ENCODE measurements at regions of chr20 and their contacts with region 1.

Region 1: DNA sequence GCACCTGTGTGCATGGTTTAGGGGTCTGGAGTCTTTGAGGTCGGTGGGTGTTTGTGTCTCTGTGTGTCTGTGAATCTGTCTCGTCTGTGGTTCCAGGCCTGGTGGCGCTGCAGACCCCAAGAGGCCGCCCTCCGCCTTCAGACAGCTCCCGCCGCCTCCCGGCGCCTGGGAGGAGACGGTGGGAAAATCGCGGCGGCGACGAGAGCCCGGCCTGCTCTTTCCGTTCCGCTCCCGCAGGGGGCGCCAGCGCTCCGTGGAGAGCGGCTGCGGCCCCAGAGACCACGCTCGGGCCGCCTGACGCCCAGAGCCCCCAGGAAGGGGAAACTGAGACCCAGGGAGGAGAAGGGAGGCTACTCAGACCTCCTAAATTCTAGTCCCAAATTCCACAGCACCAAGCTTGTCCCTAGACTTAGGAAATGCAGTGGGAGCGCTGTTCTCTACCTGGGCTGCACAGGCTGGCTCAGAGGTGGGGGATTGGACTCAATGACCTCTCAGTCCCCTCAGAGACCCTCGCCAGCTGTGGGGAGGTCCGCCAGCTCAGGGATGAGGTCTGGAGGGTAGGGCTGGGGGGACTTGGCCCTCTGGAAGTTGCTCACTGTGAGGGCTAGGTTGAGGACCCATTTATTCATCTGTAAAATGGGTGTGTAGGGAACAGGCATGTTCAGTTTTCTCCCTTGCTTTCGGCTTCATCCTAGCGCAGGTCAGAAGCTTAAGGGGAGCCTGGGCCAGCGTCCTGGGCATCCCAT is 36.9 kb upstream of the BLCAP start:
- DNase-seq: peak; percentile 62 to 82 (median 78)
- ATAC-seq: peak; percentile 88
- H3K4me3 ChIP-seq: no peak overlapping the region
- H3K27ac ChIP-seq: no peak overlapping the region
- H3K4me1 ChIP-seq: peaks cover 10 to 16% of the 10 kb centered on the region in 2 experiments; a peak in 4 of 5 replicates
- H3K27me3 ChIP-seq: peaks cover 5 to 30% of the 10 kb centered on the region in 2 experiments; a peak in 3 of 5 replicates
- CTCF ChIP-seq: peak; percentile 88 to 94 (median 89)
- EP300 ChIP-seq: no peak
- POLR2A ChIP-seq: no peak
- RAD21 ChIP-seq: peak; percentile 92

Region 2: DNA sequence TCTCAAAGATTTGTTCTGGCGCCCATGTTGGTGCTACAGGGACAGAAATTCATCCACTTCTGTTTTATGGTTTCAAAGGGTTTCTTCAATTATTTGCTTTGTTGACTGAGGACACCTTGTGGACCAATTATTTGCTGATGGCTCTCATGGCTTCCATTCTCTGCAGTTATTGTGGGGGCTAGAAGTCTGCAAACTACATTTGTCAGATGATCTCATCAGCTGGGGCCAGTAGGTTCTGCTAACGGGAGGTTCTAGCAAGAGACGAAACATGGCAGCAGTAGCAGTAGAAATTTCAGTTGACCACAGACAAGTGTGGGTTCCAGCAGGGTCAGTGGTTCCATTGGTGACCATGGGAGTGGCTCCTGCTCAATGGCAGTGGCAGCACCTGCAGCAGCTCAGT is 35.9 kb after region 1 on chr20:
- CTCF ChIA-PET with region 1: interaction called, 4 read pairs
- POLR2A ChIA-PET with region 1: no interaction called
- in situ Hi-C with region 1: no loop called
- intact Hi-C with region 1: loop called (anchors 1 kb)
- DNase-seq: no peak
- ATAC-seq: no peak
- H3K4me3 ChIP-seq: no peak overlapping the region
- H3K27ac ChIP-seq: no peak overlapping the region
- H3K4me1 ChIP-seq: peaks cover 0 to 5% of the 10 kb centered on the region in 2 experiments; a peak in 1 of 5 replicates
- H3K27me3 ChIP-seq: peaks cover 9 to 55% of the 10 kb centered on the region in 2 experiments; a peak in 3 of 5 replicates
- CTCF ChIP-seq: peak in 1 of 3 experiments; percentile 20; a peak in 1 of 6 replicates
- EP300 ChIP-seq: no peak
- POLR2A ChIP-seq: no peak
- RAD21 ChIP-seq: peak; percentile 13 to 28; a peak in 1 of 4 replicates

Region 3: GRCh38 chr20:37990571-37991151 is 426.1 kb after region 1 on chr20:
- CTCF ChIA-PET with region 1: interaction called, 3 read pairs
- POLR2A ChIA-PET with region 1: no interaction called
- in situ Hi-C with region 1: no loop called
- intact Hi-C with region 1: loop called (anchors 2 kb)
- DNase-seq: peak in 1 of 4 experiments; percentile 42
- ATAC-seq: no peak
- H3K4me3 ChIP-seq: no peak overlapping the region
- H3K27ac ChIP-seq: no peak overlapping the region
- H3K4me1 ChIP-seq: peaks cover 8 to 10% of the 10 kb centered on the region in 2 experiments; a peak in 3 of 5 replicates
- H3K27me3 ChIP-seq: no peaks in the 10 kb centered on the region
- CTCF ChIP-seq: no peak
- EP300 ChIP-seq: no peak
- POLR2A ChIP-seq: no peak
- RAD21 ChIP-seq: no peak

Region 4: GRCh38 chr20:38239441-38239840 is 674.9 kb after region 1 on chr20:
- CTCF ChIA-PET with region 1: no interaction called
- POLR2A ChIA-PET with region 1: no interaction called
- in situ Hi-C with region 1: loop called (anchors 5 kb)
- intact Hi-C with region 1: no loop called
- DNase-seq: no peak
- ATAC-seq: no peak
- H3K4me3 ChIP-seq: no peak overlapping the region
- H3K27ac ChIP-seq: no peak overlapping the region
- H3K4me1 ChIP-seq: no peaks in the 10 kb centered on the region
- H3K27me3 ChIP-seq: peaks cover 2 to 10% of the 10 kb centered on the region in 2 experiments; a peak in 3 of 5 replicates
- CTCF ChIP-seq: no peak
- EP300 ChIP-seq: no peak
- POLR2A ChIP-seq: no peak
- RAD21 ChIP-seq: no peak